Naive thymus-derived CD4-positive, alpha-beta T cell (primary cell): ENCODE measurements at regions of chr22 and their contacts with region 1.

Region 1: DNA sequence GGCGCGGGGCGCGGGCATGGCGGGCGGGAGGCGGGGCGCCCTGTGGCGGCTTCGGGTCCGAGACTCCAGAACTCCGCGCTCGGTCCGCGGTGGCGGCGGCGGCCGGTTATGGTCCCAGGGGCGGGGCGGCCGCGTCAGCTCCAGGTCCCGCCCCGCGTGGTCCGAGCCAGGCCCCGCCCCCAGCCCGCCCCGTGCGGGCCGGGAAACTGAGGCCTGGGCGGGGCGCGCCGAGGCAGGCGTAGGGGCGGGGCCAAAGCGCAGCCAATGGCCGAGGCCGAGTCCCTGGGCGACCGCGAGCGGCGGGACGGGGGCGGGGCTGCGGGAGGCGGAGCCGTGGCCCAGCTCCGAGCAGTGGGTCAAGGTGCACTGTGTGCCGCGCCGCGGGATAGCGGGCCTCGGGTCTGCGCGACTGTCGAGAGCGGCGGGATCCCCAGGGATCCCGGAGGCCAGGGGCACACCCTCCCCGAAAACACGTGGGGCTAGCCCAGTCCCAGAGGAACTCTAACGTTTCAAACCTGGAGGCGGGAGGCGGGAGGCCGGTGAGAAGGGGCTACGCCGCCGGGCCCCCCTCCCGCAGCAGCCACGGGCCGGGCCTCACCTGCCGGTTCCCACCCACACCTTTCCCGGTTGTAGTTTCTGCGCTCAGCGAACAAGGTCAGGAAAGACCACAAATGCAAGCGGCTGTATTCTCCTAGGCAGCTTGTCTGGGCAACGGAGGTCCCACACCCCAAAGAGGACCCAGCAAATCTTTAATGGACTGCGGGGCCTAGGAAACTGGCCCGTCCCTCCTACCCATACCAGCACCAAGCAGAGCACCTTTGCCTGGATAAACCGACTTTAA is at the start of gene SLC25A1:
- DNase-seq: peak in 8 of 9 donors; percentile 42 to 96 (median 49)
- ATAC-seq: peak; percentile 82
- H3K4me3 ChIP-seq: peak within 1 kb of the TSS; percentile 58
- H3K4me3 Mint-ChIP-seq: peak within 1 kb of the TSS; percentile 83 to 92 (median 86)
- H3K27ac ChIP-seq: peak within 1 kb of the TSS; percentile 63
- H3K27ac Mint-ChIP-seq: peak within 1 kb of the TSS; percentile 31 to 92 (median 85)
- H3K4me1 ChIP-seq: peaks cover 7 to 9% of the 10 kb centered on the region in 2 donors
- H3K4me1 Mint-ChIP-seq: peaks cover 13 to 28% (median 23%) of the 10 kb centered on the region in 7 donors
- H3K27me3 ChIP-seq: no peaks in the 10 kb centered on the region
- H3K27me3 Mint-ChIP-seq: no peaks in the 10 kb centered on the region
- total RNA-seq, gene SLC25A1: 19.3 to 34.0 (median 30.7) TPM

Region 2: DNA sequence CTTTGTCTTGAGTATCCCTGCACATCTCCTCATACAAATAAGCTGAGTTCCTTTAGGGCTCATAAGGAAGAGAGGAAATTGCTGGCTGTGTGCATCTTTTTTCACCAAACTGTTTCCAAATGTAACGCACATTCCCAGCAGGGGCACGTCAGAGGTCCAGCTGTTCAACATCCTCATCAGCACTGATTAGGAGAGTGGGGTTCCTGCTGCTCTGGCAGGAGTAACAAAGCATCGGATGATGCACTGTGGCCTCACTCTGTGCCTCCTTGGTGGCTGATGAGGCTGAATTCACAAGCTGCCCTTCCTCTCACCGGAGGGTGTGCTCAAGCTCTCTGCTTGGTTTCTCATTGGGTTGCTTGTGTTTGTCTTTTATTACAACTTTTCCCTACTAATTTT is 35.2 kb after region 1 on chr22:
- CTCF ChIA-PET with region 1: no interaction called
- POLR2A ChIA-PET with region 1: no interaction called
- intact Hi-C with region 1: no loop called
- DNase-seq: no peak
- ATAC-seq: no peak
- H3K4me3 ChIP-seq: no peak overlapping the region
- H3K4me3 Mint-ChIP-seq: no peak overlapping the region
- H3K27ac ChIP-seq: no peak overlapping the region
- H3K27ac Mint-ChIP-seq: no peak overlapping the region
- H3K4me1 ChIP-seq: no peaks in the 10 kb centered on the region
- H3K4me1 Mint-ChIP-seq: peaks cover 0 to 6% (median 4%) of the 10 kb centered on the region in 7 donors
- H3K27me3 ChIP-seq: no peaks in the 10 kb centered on the region
- H3K27me3 Mint-ChIP-seq: peaks cover 9 to 31% (median 15%) of the 10 kb centered on the region in 5 donors

Region 3: DNA sequence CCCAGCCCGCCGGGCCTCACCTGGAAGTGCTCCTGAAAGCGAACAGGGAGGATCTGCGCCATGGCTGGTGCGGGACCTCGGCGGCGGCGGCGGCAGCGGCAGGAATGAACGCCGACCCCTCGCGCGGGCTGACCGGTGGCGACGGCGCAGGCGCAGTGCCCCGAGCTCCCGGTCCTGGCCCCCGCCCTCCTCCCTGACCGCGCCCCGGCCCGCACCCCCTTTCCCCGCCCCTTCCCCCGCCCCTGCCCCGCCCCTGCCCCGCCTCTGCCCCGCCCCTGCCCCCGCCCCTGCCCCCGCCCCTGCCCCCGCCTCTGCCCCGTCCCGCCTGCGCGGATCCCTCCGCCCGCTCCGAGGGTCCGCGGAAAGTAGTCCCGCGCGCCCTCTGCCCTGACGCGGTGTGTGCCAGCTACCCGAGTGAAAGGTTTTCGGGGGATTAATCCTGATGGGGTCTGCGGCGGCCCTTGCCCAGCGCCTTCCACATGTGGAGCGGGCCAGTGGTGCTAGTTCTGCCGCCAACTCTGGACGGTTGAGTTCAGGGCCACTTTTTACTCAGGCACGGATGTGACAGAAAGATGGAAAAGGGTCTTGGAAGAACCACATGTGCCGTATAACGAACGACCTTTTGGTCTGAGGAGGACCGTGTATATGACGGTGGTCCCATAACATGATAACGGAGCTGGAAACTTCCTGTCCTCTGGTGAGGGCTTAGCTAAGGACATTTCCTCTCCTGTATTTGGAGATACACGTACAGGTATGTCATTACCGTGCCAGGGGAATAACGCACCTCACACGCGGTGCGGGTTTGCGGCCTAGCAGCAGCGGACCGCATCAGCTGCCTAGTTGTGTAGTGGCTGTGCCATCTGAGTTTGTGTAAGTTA is 112.9 kb after region 1 on chr22 and contains the start of gene CLTCL1:
- CTCF ChIA-PET with region 1: no interaction called
- POLR2A ChIA-PET with region 1: no interaction called
- intact Hi-C with region 1: loop called (anchors 1 kb)
- DNase-seq: peak; percentile 38 to 81 (median 67)
- ATAC-seq: peak; percentile 90
- H3K4me3 ChIP-seq: peak within 1 kb of the TSS; percentile 82
- H3K4me3 Mint-ChIP-seq: peak within 1 kb of the TSS; percentile 76 to 93 (median 92)
- H3K27ac ChIP-seq: peak within 1 kb of the TSS; percentile 76
- H3K27ac Mint-ChIP-seq: peak within 1 kb of the TSS; percentile 64 to 93 (median 85)
- H3K4me1 ChIP-seq: peaks cover 6 to 8% of the 10 kb centered on the region in 2 donors
- H3K4me1 Mint-ChIP-seq: peaks cover 13 to 33% (median 25%) of the 10 kb centered on the region in 7 donors
- H3K27me3 ChIP-seq: no peaks in the 10 kb centered on the region
- H3K27me3 Mint-ChIP-seq: peaks cover 5 to 55% (median 23%) of the 10 kb centered on the region in 5 donors
- total RNA-seq, gene CLTCL1: 0.22 to 3.1 (median 1.4) TPM

Region 4: DNA sequence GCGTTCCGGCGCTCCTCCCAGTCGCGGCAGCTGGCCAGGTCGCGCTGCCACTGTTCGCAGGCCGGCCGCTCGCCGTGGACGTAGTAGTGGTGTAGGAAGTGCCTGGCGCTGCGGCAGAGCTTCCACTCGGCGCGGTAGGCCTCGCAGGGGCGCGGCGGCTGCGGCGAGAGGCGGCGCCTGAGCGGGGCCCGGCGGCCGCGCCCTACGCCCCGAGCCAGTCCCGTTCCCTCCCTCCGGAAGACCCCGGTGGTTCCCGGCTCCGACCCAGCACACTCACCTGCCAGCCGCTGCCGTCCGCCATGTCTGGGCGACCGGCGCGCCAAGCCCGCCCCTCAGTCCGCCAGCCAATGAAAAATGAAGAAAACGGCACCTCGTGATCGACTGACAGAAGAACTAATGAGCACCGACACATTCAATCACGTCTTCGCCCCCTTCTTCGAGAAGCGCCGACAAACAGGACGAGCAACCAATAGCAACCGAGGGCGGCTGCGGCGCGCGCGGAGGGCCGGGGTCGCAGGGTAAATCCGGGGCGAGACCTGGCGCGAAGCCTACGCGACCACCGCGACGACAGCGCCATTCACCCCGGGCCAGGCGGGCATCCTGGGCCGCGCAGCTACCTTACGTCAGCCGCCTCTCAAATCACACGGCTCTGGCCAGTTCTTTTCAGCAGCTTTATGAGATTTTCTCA is 268.7 kb after region 1 on chr22 and contains the start of gene C22orf39:
- CTCF ChIA-PET with region 1: no interaction called
- POLR2A ChIA-PET with region 1: no interaction called
- intact Hi-C with region 1: loop called (anchors 1 kb)
- DNase-seq: peak; percentile 69 to 93 (median 90)
- ATAC-seq: peak; percentile 94
- H3K4me3 ChIP-seq: peak within 1 kb of the TSS; percentile 65
- H3K4me3 Mint-ChIP-seq: peak within 1 kb of the TSS; percentile 84 to 99 (median 92)
- H3K27ac ChIP-seq: peak within 1 kb of the TSS; percentile 81
- H3K27ac Mint-ChIP-seq: peak within 1 kb of the TSS; percentile 84 to 97 (median 94)
- H3K4me1 ChIP-seq: peaks cover 18 to 26% of the 10 kb centered on the region in 2 donors
- H3K4me1 Mint-ChIP-seq: peaks cover 21 to 61% (median 48%) of the 10 kb centered on the region in 7 donors
- H3K27me3 ChIP-seq: no peaks in the 10 kb centered on the region
- H3K27me3 Mint-ChIP-seq: no peaks in the 10 kb centered on the region
- total RNA-seq, gene C22orf39: 34.2 to 44.9 (median 36.8) TPM